ENCODE measurements at regions of chr12 and their contacts with region 1.

Region 1: DNA sequence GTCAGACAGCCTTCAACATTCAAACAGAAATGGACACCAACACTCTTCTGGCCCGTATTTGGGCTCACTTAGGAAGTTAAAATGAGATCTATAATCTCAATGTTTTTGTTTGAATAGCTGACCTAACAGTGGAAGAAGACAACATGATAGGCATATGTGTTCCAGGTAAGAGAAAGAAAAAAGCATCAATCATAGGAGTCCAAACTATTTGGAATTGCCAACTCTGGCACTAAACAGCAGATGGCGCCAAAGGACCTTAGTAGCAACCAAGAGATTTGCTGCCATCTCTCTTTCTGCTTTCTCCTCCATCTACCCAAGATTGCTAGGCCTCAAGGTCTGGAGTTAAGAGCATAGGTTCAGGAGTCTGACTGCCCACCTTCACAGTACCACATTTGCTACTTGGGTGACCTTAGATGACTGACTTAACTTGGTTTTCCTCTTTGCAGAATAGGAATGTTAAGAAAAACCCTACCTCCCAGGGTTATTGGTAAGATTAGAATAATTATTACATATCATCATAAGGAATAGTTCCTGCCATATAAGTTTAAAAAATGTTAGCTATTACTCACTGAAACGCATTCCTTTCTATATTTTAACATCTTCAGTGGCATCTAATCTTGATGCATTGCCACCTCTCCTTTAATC is 30.2 kb downstream of the PEX5 start:
- DNase-seq: peak; percentile 80 to 90
- H3K4me3 ChIP-seq: no peak overlapping the region
- H3K27ac ChIP-seq: no peak overlapping the region
- H3K4me1 ChIP-seq: no peaks in the 10 kb centered on the region
- H3K27me3 ChIP-seq: no peaks in the 10 kb centered on the region
- CTCF ChIP-seq: peak in 5 of 7 experiments; percentile 63 to 87 (median 77)
- EP300 ChIP-seq: no peak
- POLR2A ChIP-seq: no peak

Region 2: DNA sequence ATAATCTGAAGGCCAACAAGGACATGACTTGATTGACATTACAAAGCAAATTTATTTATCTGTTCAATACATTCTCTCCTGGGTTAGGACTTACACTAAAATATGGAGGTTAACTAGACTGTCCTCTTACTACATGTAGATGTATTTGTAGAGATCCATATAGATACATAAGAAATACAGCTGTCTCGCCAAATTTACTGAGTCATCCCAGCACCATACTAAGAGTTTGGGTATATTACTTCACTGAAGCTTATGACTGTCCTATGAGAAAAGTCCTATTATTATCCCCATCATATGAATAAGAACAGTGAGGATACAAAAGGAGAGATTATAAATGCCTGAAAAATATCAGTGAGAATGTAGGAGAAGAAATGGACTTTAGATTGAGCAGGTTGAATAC is 39.3 kb after region 1 on chr12:
- intact Hi-C with region 1: no loop called
- DNase-seq: no peak
- H3K4me3 ChIP-seq: no peak overlapping the region
- H3K27ac ChIP-seq: no peak overlapping the region
- H3K4me1 ChIP-seq: no peaks in the 10 kb centered on the region
- H3K27me3 ChIP-seq: no peaks in the 10 kb centered on the region
- CTCF ChIP-seq: no peak
- EP300 ChIP-seq: no peak
- POLR2A ChIP-seq: no peak

Region 3: DNA sequence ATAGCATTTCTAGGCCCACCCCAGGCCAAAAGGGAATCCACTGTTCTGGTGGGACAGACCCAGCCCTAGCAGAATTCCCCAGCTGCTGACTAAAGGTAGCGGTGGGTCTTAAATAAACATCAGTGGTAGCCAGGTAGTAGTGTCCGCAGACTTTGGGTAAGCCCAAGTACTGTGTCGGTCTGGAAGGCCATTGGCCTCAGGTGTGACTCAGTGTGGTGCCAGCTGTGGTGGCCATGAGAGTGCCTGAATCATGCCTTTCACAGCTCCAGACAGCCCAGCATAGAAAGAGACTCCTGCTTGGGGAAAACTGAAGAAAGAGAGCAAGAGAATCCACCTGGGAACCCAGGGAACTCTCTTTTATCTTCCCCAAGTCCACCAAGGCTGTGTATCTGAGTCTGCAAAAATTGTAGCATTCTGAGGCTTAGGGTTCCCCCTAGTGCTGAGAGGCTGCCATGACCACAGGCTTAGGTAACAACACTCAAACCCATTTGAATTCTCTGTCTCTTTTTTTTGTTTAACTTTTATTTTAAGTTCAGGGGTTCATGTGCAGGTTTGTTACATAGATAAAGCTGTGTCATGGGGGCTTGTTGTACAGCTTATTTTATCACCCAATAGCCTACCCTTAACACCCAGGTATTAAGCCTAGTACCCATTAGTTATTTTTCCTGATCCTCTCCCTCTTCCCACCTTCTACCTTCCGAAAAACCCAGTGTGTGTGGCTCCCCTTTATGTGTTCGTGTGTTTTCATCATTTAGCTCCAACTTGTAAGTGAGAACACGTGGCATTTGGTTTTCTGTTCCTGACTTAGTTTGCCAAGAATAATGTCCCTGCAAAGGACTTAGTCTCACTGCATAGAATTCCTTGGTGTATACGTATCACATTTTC is 240.9 kb after region 1 on chr12:
- intact Hi-C with region 1: loop called (anchors 5 kb)
- DNase-seq: peak; percentile 52 to 61
- H3K4me3 ChIP-seq: no peak overlapping the region
- H3K27ac ChIP-seq: no peak overlapping the region
- H3K4me1 ChIP-seq: no peaks in the 10 kb centered on the region
- H3K27me3 ChIP-seq: no peaks in the 10 kb centered on the region
- CTCF ChIP-seq: peak in 4 of 7 experiments; percentile 34 to 74 (median 44)
- EP300 ChIP-seq: no peak
- POLR2A ChIP-seq: no peak

Region 4: GRCh38 chr12:7638760-7639555 is 419.2 kb after region 1 on chr12:
- intact Hi-C with region 1: loop called (anchors 5 kb)
- DNase-seq: peak; percentile 81 to 95
- H3K4me3 ChIP-seq: peak overlapping the region in 3 of 4 donors; percentile 37 to 41 (median 41)
- H3K27ac ChIP-seq: no peak overlapping the region
- H3K4me1 ChIP-seq: peaks cover 6 to 20% (median 14%) of the 10 kb centered on the region in 4 donors
- H3K27me3 ChIP-seq: peaks cover 0 to 13% (median 0%) of the 10 kb centered on the region in 3 donors
- CTCF ChIP-seq: peak in 6 of 7 experiments; percentile 59 to 94 (median 88)
- EP300 ChIP-seq: no peak
- POLR2A ChIP-seq: no peak

Measured in stomach (tissue), 19 donors.